Heart right ventricle (tissue), 16 donors: ENCODE measurements at regions of chrX and their contacts with region 1.

Region 1: DNA sequence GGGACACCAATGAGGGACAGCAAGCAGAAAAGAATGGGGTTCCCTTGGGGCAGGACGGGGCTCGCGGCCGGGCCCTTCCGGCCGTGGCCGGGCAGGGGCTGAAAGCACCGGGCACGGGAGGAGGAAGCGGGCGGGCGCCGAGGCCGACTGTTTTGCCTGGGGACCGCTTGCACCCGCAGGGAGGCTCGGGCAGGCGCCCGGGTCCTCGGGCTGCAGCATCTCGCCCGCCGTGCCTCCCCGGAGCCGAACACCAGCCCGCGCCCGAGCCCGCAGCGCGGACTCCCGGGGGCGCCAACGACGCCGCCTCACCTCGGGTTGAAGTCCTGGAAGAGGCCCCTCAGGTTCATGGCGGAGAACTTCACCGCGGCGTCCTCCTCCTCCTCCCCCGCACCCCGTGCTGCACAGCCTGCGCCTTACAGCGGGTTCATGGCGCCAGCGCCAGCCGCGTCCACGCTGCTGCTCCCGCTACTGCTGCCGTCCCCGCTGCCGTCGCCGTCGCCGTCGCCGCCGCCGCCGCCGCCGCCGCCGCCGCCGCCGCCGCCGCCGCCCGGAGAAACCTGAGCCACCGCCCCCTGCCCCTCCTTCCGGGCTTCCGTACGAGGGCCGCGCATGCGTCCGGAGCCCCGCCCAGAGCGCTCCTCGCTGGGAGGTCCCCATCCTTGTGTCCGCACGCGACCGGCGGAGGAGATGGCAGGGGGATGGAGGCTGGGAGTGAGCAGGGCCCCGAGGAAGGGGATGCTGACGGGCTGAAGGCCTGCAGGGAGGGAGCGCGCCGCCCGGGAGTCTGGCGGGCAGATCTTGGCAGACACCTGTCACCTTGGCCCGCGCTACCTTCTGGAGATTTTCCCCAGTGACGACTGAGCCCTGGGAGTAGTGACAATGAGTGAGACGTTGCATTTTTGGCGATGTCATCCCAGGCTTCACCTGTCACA is at the start of gene TMEM185A:
- DNase-seq: peak; percentile 70 to 79
- ATAC-seq: peak; percentile 67 to 91 (median 84)
- H3K4me3 ChIP-seq: peak within 1 kb of the TSS; percentile 47 to 85 (median 75)
- H3K27ac ChIP-seq: peak within 1 kb of the TSS; percentile 61 to 87 (median 80)
- H3K4me1 ChIP-seq: peaks cover 0 to 40% (median 14%) of the 10 kb centered on the region in 9 donors
- H3K27me3 ChIP-seq: peaks cover 0 to 23% (median 0%) of the 10 kb centered on the region in 7 donors
- CTCF ChIP-seq: no peak
- total RNA-seq, gene TMEM185A: 27.1 to 42.8 (median 34.5) TPM

Region 2: DNA sequence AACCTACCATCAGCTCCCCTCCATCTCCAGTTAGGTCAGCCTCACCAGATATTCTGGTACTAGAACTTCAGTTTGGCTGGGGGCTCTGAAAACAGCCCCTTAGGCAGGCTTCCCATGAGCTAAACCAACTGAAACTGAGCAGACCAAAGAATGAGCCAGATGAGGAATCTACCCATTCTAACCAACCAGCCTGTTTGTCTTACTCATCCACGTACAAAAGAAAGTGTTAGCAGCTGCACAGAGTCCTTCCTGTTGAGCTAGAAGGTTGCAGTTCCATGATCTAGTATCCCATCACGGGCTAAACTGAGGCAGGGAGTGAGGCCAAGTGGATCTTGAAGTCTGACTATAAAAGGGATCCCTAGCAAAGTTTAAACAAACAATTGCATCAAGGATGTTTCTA is 61.7 kb before region 1 on chrX:
- intact Hi-C with region 1: loop called in 1 of 10 experiments (anchors 10 kb)
- DNase-seq: no peak
- ATAC-seq: no peak
- H3K4me3 ChIP-seq: no peak overlapping the region
- H3K27ac ChIP-seq: peak overlapping the region in 2 of 10 donors; percentile 3 to 13
- H3K4me1 ChIP-seq: peaks cover 0 to 7% (median 0%) of the 10 kb centered on the region in 9 donors
- H3K27me3 ChIP-seq: no peaks in the 10 kb centered on the region
- CTCF ChIP-seq: no peak